Cardiac septum (tissue), 1 donor: ENCODE measurements at regions of chr7 and their contacts with region 1.

Region 1: GRCh38 chr7:76509931-76510877 is at the start of gene UPK3B:
- DNase-seq: no peak
- total RNA-seq, gene UPK3B: 0.38 TPM

Region 2: GRCh38 chr7:76997381-76997780 is 487.2 kb after region 1 on chr7:
- intact Hi-C with region 1: loop called (anchors 10 kb)
- DNase-seq: peak; percentile 38